ENCODE measurements at regions of chr5 and their contacts with region 1.

Region 1: GRCh38 chr5:104904561-104904960 is 1342.0 kb upstream of the NUDT12 start:
- DNase-seq: no peak
- ATAC-seq: no peak
- H3K4me3 ChIP-seq: no peak overlapping the region
- H3K27ac ChIP-seq: no peak overlapping the region
- H3K4me1 ChIP-seq: no peaks in the 10 kb centered on the region
- H3K27me3 ChIP-seq: no peaks in the 10 kb centered on the region
- CTCF ChIP-seq: no peak

Region 2: DNA sequence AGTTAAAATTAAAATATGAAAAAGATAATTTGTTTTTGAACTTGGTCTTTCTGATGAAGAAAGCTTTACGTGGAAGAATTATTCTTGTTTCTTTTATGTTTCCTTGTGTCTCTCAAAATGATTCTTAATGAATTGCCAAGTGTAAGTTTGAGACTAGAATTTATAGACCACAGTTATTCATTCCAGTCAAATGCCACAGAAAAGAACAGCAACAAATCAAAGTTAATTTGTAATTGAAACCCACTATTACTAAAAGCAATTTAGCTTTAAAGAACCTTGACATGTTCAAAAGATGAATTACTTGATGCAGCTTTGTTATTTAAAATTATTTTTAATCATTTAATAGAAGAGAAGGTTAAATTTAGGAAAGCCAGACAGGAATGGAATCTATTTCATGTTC is 64.3 kb before region 1 on chr5:
- intact Hi-C with region 1: loop called in 1 of 10 experiments (anchors 2 kb)
- DNase-seq: no peak
- ATAC-seq: no peak
- H3K4me3 ChIP-seq: no peak overlapping the region
- H3K27ac ChIP-seq: no peak overlapping the region
- H3K4me1 ChIP-seq: no peaks in the 10 kb centered on the region
- H3K27me3 ChIP-seq: no peaks in the 10 kb centered on the region
- CTCF ChIP-seq: no peak